Aorta (tissue), 5 donors: ENCODE measurements at regions of chr5 and their contacts with region 1.

Region 1: DNA sequence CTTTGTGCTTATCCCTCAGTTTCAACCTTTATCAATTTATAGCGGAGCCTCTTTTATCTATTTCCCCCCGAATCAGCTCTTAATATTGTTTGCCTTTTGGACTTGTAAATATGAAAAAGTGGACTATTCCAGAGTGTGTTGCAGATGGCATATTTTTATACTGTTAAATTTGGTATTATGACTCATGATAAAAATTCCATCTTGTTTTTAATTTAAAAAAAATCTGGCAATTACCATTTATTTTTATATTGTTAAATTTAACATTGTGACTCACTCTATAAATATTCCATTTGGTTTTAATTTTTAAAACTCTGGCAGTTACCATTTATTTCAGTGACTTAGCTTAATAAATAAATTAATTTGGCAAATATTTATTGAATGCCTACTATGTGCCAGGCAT is 37.5 kb downstream of the RBM27 start:
- DNase-seq: no peak
- ATAC-seq: peak; percentile 40
- H3K4me3 ChIP-seq: no peak overlapping the region
- H3K27ac ChIP-seq: peak overlapping the region in 1 of 2 donors; percentile 2
- H3K4me1 ChIP-seq: peaks cover 0 to 4% of the 10 kb centered on the region in 2 donors
- H3K27me3 ChIP-seq: no peaks in the 10 kb centered on the region

Region 2: GRCh38 chr5:145743396-145744061 is 497.4 kb before region 1 on chr5:
- intact Hi-C with region 1: no loop called
- DNase-seq: no peak
- ATAC-seq: peak; percentile 44
- H3K4me3 ChIP-seq: no peak overlapping the region
- H3K27ac ChIP-seq: no peak overlapping the region
- H3K4me1 ChIP-seq: no peaks in the 10 kb centered on the region
- H3K27me3 ChIP-seq: no peaks in the 10 kb centered on the region

Region 3: GRCh38 chr5:146179696-146180095 is 61.3 kb before region 1 on chr5:
- intact Hi-C with region 1: loop called in 1 of 2 experiments (anchors 5 kb)
- DNase-seq: no peak
- ATAC-seq: no peak
- H3K4me3 ChIP-seq: no peak overlapping the region
- H3K27ac ChIP-seq: no peak overlapping the region
- H3K4me1 ChIP-seq: peaks cover 1 to 3% of the 10 kb centered on the region in 2 donors
- H3K27me3 ChIP-seq: no peaks in the 10 kb centered on the region

Region 4: DNA sequence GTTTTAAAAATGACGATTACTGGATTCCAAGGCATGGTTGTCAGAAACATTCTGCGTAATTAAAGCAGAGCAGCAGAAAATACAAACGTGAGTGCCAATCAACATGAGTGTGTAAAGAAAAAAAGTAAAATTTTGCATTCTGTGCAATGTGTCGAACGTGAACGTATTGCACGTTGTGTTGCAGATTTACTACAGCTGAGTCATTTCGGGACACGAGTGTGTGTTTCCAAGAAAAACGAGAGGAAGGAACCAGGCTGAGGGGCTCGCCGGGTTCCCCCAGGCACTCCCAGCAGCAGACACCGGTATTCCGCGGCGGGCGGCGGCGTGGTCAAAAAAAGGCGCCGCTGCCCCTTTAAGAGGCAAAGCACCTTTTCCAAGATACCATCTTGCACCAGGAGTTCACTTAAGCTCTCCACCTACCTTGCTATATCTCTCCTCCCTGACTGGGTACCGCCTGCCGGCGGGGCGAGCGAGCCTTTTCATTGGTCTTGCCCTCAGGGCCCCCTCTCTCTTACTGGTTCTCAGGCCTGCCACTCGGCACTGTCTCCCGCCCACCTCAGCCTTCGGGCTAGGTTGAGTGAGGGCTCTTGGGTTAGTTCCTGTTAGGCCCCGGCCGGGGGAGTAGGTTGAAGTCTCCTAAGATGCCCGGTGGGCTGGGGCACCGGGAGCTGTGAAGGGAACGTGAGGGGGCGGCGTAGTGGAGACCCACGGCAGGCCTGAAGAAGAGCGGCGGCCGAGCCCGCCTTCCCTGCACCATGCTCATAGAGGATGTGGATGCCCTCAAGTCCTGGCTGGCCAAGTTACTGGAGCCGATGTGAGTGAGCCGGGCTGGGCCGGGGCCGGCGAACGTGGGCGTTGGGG is 37.7 kb before region 1 on chr5 and contains the start of gene RBM27:
- intact Hi-C with region 1: loop called in 1 of 2 experiments (anchors 5 kb)
- DNase-seq: peak; percentile 97 to 98
- ATAC-seq: peak; percentile 100
- H3K4me3 ChIP-seq: peak within 1 kb of the TSS; percentile 81 to 97
- H3K27ac ChIP-seq: peak within 1 kb of the TSS in 1 of 2 donors; percentile 74
- H3K4me1 ChIP-seq: peaks cover 0 to 4% of the 10 kb centered on the region in 2 donors
- H3K27me3 ChIP-seq: no peaks in the 10 kb centered on the region
- total RNA-seq, gene RBM27: 23.2 to 24.9 TPM